ENCODE measurements at regions of chr20 and their contacts with region 1.

Region 1: DNA sequence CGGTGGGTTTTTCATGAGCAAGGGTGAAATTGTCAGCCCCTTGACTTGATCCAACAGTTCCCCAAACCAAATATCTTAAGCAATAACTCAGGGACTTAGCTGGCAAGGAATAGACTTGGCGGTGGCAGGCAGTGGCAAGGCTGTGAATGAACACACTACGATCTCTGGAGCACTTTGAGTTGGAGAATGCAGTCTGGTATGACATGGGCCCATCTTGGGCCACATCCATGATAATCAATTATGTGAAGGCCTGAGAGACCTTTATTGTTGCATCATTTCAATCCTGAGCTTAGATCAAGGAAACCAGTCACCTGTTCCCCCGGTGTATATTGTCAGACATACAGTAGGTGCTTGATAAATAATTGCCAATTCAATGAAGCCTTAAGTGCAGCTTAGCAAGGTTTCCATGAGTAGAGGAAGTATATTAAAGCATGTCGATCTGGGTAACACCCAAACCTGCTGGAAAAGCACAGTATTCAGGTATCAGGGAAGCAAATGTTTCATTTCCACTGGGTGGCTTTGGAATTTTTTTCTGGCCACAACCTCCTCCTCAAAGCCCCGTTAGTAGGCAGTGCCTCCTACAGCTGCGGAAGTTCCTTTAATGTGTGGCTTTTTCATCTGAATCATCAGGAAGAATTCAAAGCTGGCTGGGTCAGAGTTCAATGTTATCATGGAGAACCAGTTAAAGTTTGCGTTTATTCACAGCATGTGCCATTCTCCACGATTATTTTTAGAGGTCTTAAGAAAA is 10.2 kb downstream of the CASS4 start:
- DNase-seq: no peak
- H3K4me3 Mint-ChIP-seq: peak overlapping the region; percentile 8
- H3K27ac Mint-ChIP-seq: peak overlapping the region; percentile 52
- H3K4me1 Mint-ChIP-seq: peaks cover 68% of the 10 kb centered on the region
- H3K27me3 Mint-ChIP-seq: no peaks in the 10 kb centered on the region

Region 2: DNA sequence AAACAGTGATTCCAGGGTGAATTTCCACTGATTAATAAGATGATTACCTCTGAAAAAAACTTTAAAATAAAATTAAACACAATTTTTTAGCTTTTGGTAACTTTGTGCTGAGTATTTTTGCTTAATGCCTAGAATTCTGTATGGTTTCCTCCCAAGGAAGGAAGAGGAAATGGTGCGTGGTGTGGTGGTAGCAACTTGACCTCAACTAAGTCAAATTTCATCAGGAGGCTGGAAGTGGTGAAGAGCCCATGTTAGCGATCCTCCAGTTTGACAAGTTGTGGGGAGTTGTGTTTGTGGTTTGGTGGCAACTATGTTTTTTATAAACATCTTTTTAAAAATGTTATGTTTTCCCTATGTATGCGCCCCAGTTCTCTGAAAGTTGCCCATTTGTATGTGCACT is 41.2 kb after region 1 on chr20:
- CTCF ChIA-PET with region 1: no interaction called
- POLR2A ChIA-PET with region 1: interaction called, 12 read pairs
- DNase-seq: peak; percentile 74
- H3K4me3 Mint-ChIP-seq: peak overlapping the region; percentile 32
- H3K27ac Mint-ChIP-seq: peak overlapping the region; percentile 80
- H3K4me1 Mint-ChIP-seq: peaks cover 76% of the 10 kb centered on the region
- H3K27me3 Mint-ChIP-seq: no peaks in the 10 kb centered on the region